Dorsolateral prefrontal cortex (tissue), 120 donors: ENCODE measurements at regions of chr3 and their contacts with region 1.

Region 1: GRCh38 chr3:41198950-41199865 is at the start of gene CTNNB1:
- DNase-seq: peak; percentile 84 to 93 (median 90)
- H3K4me3 ChIP-seq: peak within 1 kb of the TSS; percentile 62 to 98 (median 85)
- H3K27ac ChIP-seq: peak within 1 kb of the TSS; percentile 60 to 99 (median 93)
- H3K27me3 ChIP-seq: no peaks in the 10 kb centered on the region
- CTCF ChIP-seq: peak in 45 of 56 donors; percentile 7 to 63 (median 37)
- total RNA-seq, gene CTNNB1: 196 to 326 (median 252) TPM

Region 2: DNA sequence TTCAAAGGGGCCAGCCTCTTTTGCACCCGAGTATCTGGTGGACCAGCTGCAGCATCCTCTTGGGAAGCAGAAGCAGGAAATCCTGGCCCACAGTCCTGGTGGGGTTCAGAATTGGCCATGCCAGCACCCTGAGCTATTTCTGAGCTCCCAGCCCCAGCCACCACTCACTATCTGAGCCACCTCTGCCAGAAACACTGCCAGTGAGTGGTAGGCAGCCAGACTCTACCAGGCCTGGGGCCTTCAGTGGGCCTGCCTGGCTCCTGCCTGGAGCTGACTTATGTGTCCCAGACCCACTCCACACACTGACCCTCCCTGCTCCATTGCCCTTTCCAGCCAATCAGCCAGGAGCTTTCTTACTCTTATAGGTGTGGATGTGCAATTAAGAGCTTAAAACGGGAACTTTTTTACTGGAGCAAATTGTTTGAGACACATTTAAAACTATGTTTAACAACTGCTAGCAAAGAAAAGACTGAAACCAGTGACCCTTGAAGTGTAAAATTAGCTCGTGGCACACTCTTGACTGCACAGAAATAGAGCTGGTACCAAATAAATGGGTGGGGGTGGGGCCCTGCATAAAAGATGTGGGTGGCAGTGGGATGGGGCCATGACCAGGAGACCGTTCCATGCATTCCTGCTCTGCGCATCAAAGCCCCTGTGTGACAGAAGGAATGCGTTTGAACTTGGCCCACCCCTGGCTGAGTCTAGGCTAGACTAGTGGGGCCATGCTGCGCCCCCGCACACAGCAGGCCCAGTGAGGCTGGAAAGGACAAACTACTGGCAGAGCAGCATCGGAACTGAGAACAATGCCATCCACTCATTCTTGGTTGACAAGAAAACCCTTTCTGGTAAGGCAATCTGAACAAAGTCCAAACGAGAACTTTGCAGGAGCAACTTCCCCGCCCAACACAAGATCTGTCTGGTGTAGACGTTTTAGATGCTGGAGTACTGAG is 48.1 kb after region 1 on chr3:
- intact Hi-C with region 1: loop called in 1 of 2 experiments (anchors 5 kb)
- DNase-seq: peak in 1 of 10 donors; percentile 35
- H3K4me3 ChIP-seq: peak overlapping the region in 1 of 59 donors; percentile 6
- H3K27ac ChIP-seq: no peak overlapping the region
- H3K27me3 ChIP-seq: no peaks in the 10 kb centered on the region
- CTCF ChIP-seq: peak in 2 of 56 donors; percentile 11 to 21